K562 (cell line): ENCODE measurements at regions of chr2 and their contacts with region 1.

Region 1: DNA sequence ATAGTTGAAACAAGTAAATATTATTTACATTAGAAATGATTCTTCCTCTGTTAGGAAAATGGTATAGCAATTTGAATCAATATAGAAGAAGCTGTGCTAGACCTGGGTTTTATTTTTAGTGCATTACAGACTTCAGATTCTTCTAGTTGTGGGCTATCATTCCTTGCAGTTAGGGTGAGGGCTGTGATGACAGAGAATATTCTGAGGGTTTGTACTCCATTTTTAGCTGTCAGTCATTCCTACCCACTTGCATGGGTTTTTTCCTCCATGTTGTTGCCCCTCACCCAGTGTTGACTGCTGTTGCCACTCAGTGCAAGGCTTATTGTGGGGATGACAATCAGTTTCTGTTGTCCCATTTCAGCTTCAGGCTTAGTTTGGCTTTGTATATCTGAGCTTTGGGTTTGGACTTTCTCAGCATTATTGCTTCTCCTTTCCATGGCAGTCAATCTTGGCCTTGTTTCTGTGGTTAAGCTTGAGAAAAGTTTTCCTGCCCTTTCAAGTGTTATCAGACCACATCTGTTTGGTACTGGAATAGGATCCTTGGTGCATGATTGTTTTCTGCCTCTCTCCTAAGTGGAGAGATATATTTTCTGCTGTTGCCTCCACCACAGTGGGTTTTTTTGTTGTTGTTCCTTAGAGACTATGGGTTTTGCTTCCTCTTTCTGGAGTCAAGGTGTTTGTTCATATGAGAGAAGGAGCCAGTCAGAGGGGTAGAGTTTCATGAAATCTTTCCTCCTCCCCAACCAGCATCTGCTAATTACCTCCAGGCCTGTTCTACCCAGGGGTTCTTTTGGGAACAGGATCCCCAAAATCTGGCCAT is 312.7 kb upstream of the CWC22 start:
- DNase-seq: no peak
- ATAC-seq: no peak
- H3K4me3 ChIP-seq: no peak overlapping the region
- H3K27ac ChIP-seq: no peak overlapping the region
- H3K4me1 ChIP-seq: no peaks in the 10 kb centered on the region
- H3K27me3 ChIP-seq: no peaks in the 10 kb centered on the region
- CTCF ChIP-seq: no peak
- EP300 ChIP-seq: no peak
- POLR2A ChIP-seq: no peak
- RAD21 ChIP-seq: no peak

Region 2: DNA sequence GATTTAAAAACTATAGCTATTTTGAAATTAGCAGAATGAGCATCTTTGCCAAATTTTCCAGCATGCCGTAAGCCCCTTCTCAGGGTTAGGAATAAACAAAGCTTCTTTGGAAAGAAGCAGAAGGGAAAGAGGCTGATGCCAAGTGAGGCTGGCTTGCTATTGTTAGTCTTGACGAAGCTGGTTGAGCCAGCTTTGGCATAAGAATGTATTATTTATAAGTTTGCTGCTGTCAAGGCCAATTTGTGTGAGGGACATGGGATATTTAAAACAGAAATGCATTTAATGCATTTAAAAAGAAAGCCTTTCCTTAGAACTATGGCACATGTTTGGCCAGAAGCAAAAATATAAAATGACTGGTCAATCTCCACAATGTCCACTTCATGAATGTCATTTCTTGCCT is 1460.1 kb before region 1 on chr2:
- CTCF ChIA-PET with region 1: no interaction called
- POLR2A ChIA-PET with region 1: no interaction called
- in situ Hi-C with region 1: loop called (anchors 10 kb)
- intact Hi-C with region 1: no loop called
- DNase-seq: no peak
- ATAC-seq: no peak
- H3K4me3 ChIP-seq: no peak overlapping the region
- H3K27ac ChIP-seq: no peak overlapping the region
- H3K4me1 ChIP-seq: no peaks in the 10 kb centered on the region
- H3K27me3 ChIP-seq: no peaks in the 10 kb centered on the region
- CTCF ChIP-seq: no peak
- EP300 ChIP-seq: no peak
- POLR2A ChIP-seq: no peak
- RAD21 ChIP-seq: no peak

Region 3: DNA sequence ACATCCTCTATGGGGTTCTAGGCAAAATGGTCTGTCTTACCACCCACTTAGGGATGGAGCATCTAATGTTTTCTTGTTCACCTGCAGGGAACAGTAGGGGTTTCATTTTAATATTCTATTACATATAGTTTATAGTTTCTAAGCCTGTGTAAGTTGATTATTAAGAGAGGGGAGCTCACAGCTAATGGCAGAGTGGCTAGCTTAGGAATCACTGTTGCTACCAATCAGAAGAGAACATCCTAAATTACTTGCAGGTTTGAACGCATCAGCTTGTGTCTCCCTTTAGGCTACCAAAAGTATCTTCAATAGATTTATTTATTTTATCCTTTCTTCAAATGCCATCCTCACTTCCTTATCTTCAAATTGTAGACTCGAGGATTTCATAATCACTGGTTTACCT is 117.7 kb after region 1 on chr2:
- CTCF ChIA-PET with region 1: no interaction called
- POLR2A ChIA-PET with region 1: no interaction called
- in situ Hi-C with region 1: no loop called
- intact Hi-C with region 1: no loop called
- DNase-seq: no peak
- ATAC-seq: no peak
- H3K4me3 ChIP-seq: no peak overlapping the region
- H3K27ac ChIP-seq: no peak overlapping the region
- H3K4me1 ChIP-seq: no peaks in the 10 kb centered on the region
- H3K27me3 ChIP-seq: no peaks in the 10 kb centered on the region
- CTCF ChIP-seq: no peak
- EP300 ChIP-seq: no peak
- POLR2A ChIP-seq: no peak
- RAD21 ChIP-seq: no peak